ENCODE measurements at regions of chr12 and their contacts with region 1.

Region 1: DNA sequence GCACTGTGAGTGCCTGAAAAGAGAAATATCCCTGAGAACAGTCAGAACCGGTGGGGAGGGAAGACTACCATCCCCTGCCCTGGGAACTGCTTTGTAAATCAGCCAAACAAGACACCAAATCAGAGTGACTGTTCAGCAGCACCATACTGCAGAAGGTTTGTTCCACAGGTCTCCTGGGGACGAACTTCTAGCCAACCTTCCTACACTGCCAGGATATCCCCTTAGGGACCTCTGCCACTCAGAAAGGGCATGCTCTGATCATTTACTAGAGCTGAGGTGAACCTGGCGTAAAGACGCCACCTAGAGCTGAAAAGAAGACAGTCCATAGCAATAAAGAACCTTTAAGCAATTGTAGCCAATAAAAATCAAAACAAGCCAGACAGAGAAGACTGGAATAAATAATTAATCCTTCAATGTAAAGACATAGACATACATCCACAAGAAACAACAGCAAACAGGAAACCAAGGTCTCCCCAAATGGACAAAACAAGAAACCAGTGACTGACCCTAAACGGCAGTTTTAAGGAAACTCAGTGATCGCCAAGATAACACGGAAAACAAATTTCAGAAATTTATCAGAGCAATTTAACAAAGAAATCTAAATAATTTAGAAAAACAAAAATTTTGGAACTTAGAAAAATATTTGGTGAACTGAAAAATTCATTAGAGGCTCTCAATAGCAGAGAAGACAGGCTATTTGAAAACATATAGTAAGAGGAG is 228.1 kb upstream of the AMIGO2 start:
- H3K4me3 Mint-ChIP-seq: peak overlapping the region; percentile 75
- H3K27ac Mint-ChIP-seq: peak overlapping the region; percentile 80
- H3K4me1 Mint-ChIP-seq: peaks cover 29% of the 10 kb centered on the region
- H3K27me3 Mint-ChIP-seq: peaks cover 11% of the 10 kb centered on the region

Region 2: DNA sequence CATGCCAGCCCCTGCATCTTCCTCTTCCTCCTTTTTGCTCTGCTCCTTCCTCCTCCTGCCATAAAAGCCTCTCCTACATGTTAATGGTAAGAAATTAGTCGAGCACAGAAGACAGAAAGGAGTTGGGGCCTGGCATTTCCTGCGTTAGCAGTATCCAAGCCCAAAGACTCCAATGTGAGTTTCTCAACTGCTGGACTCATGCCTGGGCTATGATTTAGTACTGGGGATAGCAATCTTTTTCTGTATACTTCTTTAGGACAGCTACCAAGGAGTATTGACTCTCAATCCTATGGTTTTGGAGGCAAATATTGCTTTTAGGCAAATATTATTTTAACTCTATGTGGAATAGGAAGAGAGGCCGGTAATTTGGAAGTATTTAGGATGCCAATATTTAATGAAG is 464.0 kb before region 1 on chr12:
- intact Hi-C with region 1: no loop called
- H3K4me3 Mint-ChIP-seq: no peak overlapping the region
- H3K27ac Mint-ChIP-seq: no peak overlapping the region
- H3K4me1 Mint-ChIP-seq: no peaks in the 10 kb centered on the region
- H3K27me3 Mint-ChIP-seq: no peaks in the 10 kb centered on the region

Region 3: GRCh38 chr12:47066278-47067025 is 241.4 kb before region 1 on chr12:
- intact Hi-C with region 1: no loop called
- H3K4me3 Mint-ChIP-seq: no peak overlapping the region
- H3K27ac Mint-ChIP-seq: no peak overlapping the region
- H3K4me1 Mint-ChIP-seq: no peaks in the 10 kb centered on the region
- H3K27me3 Mint-ChIP-seq: peaks cover 2% of the 10 kb centered on the region

Region 4: GRCh38 chr12:47079981-47080791 is 227.7 kb before region 1 on chr12:
- intact Hi-C with region 1: loop called (anchors 5 kb)
- H3K4me3 Mint-ChIP-seq: peak overlapping the region; percentile 84
- H3K27ac Mint-ChIP-seq: peak overlapping the region; percentile 58
- H3K4me1 Mint-ChIP-seq: peaks cover 49% of the 10 kb centered on the region
- H3K27me3 Mint-ChIP-seq: peaks cover 16% of the 10 kb centered on the region

Region 5: DNA sequence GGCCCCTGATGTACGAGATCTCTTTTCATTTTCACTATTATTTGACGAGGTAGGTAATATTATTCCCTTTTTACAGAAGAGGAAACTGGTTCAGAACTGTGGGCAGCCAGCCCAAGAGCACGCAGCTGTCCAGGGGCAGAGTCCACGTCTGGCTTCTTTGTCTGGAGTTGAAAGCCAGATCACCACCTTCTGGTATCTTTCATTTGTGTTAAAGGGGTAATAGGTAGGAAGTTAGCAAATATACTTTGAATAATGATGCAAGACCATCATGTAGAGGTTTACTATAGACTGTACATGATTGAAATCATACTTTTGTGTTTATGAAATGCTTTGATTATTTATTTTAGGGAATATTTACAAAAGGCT is 84.0 kb before region 1 on chr12:
- intact Hi-C with region 1: loop called (anchors 10 kb)
- H3K4me3 Mint-ChIP-seq: peak overlapping the region; percentile 11
- H3K27ac Mint-ChIP-seq: peak overlapping the region; percentile 72
- H3K4me1 Mint-ChIP-seq: peaks cover 21% of the 10 kb centered on the region
- H3K27me3 Mint-ChIP-seq: no peaks in the 10 kb centered on the region

Region 6: DNA sequence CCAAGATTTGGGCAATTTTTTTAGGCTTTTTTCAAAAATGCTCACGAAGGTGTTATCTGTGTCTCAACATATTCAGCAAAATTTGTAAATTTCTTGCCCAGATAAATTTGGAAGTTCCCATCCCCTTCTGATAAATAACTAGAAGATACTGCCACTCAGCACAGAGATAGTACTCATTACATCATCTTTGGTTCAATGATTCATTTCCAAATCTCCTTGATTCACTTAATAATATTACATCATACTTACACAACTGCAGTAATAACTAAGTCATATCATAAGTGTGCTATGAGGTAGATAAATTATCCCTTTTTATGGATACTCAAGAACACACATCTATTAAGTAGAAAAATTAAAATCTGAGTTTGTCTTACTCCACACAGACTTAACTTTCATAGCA is 308.6 kb after region 1 on chr12:
- intact Hi-C with region 1: no loop called
- H3K4me3 Mint-ChIP-seq: no peak overlapping the region
- H3K27ac Mint-ChIP-seq: no peak overlapping the region
- H3K4me1 Mint-ChIP-seq: peaks cover 13% of the 10 kb centered on the region
- H3K27me3 Mint-ChIP-seq: no peaks in the 10 kb centered on the region